Caco-2 (cell line): ENCODE measurements at regions of chr15 and their contacts with region 1.

Region 1: DNA sequence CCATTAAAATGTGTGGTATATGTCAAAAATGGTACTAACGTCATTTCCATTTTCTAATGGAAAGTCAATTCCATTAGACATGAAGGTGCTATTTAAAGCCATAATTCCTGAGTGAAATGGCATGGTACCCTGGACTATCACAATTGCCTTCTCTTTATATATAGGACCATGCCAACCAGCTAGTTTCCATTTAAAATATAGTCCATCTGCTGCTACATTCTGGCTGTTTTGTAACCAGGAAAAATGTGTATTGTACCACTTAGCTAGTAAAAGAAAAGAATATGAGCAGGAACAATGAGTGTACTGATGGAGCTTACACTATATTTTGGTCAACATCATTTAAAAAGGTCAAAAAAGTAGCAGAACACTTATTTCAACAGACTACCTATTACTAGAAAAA is 30.4 kb upstream of the HDC start:
- DNase-seq: no peak
- H3K4me3 ChIP-seq: no peak overlapping the region
- H3K4me3 Mint-ChIP-seq: no peak overlapping the region
- H3K27ac Mint-ChIP-seq: no peak overlapping the region
- H3K4me1 ChIP-seq: no peaks in the 10 kb centered on the region
- H3K4me1 Mint-ChIP-seq: no peaks in the 10 kb centered on the region
- H3K27me3 ChIP-seq: no peaks in the 10 kb centered on the region
- H3K27me3 Mint-ChIP-seq: no peaks in the 10 kb centered on the region
- CTCF ChIP-seq: no peak

Region 2: GRCh38 chr15:50151468-50151867 is 144.5 kb before region 1 on chr15:
- CTCF ChIA-PET with region 1: interaction called, 12 read pairs
- POLR2A ChIA-PET with region 1: no interaction called
- intact Hi-C with region 1: no loop called
- DNase-seq: no peak
- H3K4me3 ChIP-seq: no peak overlapping the region
- H3K4me3 Mint-ChIP-seq: no peak overlapping the region
- H3K27ac Mint-ChIP-seq: no peak overlapping the region
- H3K4me1 ChIP-seq: peaks cover 13% of the 10 kb centered on the region; the same call in 1 of the 2 replicates
- H3K4me1 Mint-ChIP-seq: peaks cover 8% of the 10 kb centered on the region
- H3K27me3 ChIP-seq: no peaks in the 10 kb centered on the region
- H3K27me3 Mint-ChIP-seq: no peaks in the 10 kb centered on the region
- CTCF ChIP-seq: no peak

Region 3: GRCh38 chr15:50344006-50344464 is 48.1 kb after region 1 on chr15:
- CTCF ChIA-PET with region 1: no interaction called
- POLR2A ChIA-PET with region 1: no interaction called
- intact Hi-C with region 1: no loop called
- DNase-seq: peak; percentile 68
- H3K4me3 ChIP-seq: no peak overlapping the region
- H3K4me3 Mint-ChIP-seq: peak overlapping the region; percentile 36
- H3K27ac Mint-ChIP-seq: peak overlapping the region; percentile 71
- H3K4me1 ChIP-seq: peaks cover 20% of the 10 kb centered on the region
- H3K4me1 Mint-ChIP-seq: peaks cover 22% of the 10 kb centered on the region
- H3K27me3 ChIP-seq: no peaks in the 10 kb centered on the region
- H3K27me3 Mint-ChIP-seq: no peaks in the 10 kb centered on the region
- CTCF ChIP-seq: no peak